PC-9 (cell line): ENCODE measurements at regions of chr12 and their contacts with region 1.

Region 1: GRCh38 chr12:7872566-7873319 is at the start of gene SLC2A14:
- DNase-seq: no peak
- H3K4me3 ChIP-seq: no peak within 1 kb of the TSS
- H3K27ac ChIP-seq: no peak within 1 kb of the TSS
- H3K4me1 ChIP-seq: peaks cover 4% of the 10 kb centered on the region; the same call in 1 of the 2 replicates
- H3K27me3 ChIP-seq: no peaks in the 10 kb centered on the region
- CTCF ChIP-seq: no peak
- total RNA-seq, gene SLC2A14: 0.13 TPM in 1 of 2 replicates, not detected in the other

Region 2: GRCh38 chr12:6444704-6445688 is 1427.7 kb before region 1 on chr12 and contains the start of gene CD27:
- CTCF ChIA-PET with region 1: interaction called, 12 read pairs
- POLR2A ChIA-PET with region 1: no interaction called
- intact Hi-C with region 1: no loop called
- DNase-seq: no peak
- H3K4me3 ChIP-seq: no peak within 1 kb of the TSS
- H3K27ac ChIP-seq: no peak within 1 kb of the TSS
- H3K4me1 ChIP-seq: no peaks in the 10 kb centered on the region
- H3K27me3 ChIP-seq: no peaks in the 10 kb centered on the region
- CTCF ChIP-seq: no peak
- total RNA-seq, gene CD27: not detected in 2 replicates